Mammary epithelial cell (primary cell): ENCODE measurements at regions of chr18 and their contacts with region 1.

Region 1: GRCh38 chr18:26566874-26567555 is 18.7 kb upstream of the KCTD1 start:
- DNase-seq: no peak
- H3K4me3 ChIP-seq: no peak overlapping the region
- H3K27ac ChIP-seq: no peak overlapping the region
- H3K4me1 ChIP-seq: no peaks in the 10 kb centered on the region
- H3K27me3 ChIP-seq: no peaks in the 10 kb centered on the region
- CTCF ChIP-seq: peak in 1 of 2 donors; percentile 18

Region 2: GRCh38 chr18:26648509-26649192 is 81.6 kb after region 1 on chr18:
- CTCF ChIA-PET with region 1: no interaction called
- dilution Hi-C with region 1: no loop called
- in situ Hi-C with region 1: no loop called
- intact Hi-C with region 1: loop called (anchors 2 kb)
- DNase-seq: no peak
- H3K4me3 ChIP-seq: no peak overlapping the region
- H3K27ac ChIP-seq: no peak overlapping the region
- H3K4me1 ChIP-seq: no peaks in the 10 kb centered on the region
- H3K27me3 ChIP-seq: no peaks in the 10 kb centered on the region
- CTCF ChIP-seq: no peak

Region 3: DNA sequence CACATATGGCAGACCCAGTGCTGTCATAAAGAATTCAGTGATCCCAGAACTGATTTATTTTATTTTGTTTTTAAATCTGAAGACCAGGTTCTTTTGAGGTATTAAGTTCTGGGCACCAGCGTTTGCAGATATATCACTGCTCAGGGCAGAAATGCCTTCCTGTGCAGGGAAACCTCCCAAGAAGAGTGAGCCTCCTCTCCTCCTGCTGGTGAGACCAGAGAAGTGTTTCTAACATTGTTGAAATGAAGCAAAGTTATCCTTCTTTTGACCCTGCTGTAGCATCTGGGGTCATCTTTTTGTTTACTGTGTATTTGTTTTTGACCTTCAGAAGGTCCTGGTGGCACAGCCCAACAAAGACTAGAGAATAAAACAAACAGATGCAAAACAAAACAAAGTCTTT is 204.5 kb after region 1 on chr18:
- CTCF ChIA-PET with region 1: no interaction called
- dilution Hi-C with region 1: no loop called
- in situ Hi-C with region 1: no loop called
- intact Hi-C with region 1: loop called (anchors 1 kb)
- DNase-seq: no peak
- H3K4me3 ChIP-seq: no peak overlapping the region
- H3K27ac ChIP-seq: no peak overlapping the region
- H3K4me1 ChIP-seq: no peaks in the 10 kb centered on the region
- H3K27me3 ChIP-seq: peaks cover 5% of the 10 kb centered on the region
- CTCF ChIP-seq: peak; percentile 43 to 72